ENCODE measurements at regions of chr12 and their contacts with region 1.

Region 1: GRCh38 chr12:19675361-19675760 is 236.1 kb downstream of the AEBP2 start:
- DNase-seq: no peak
- H3K4me3 Mint-ChIP-seq: no peak overlapping the region
- H3K27ac Mint-ChIP-seq: no peak overlapping the region
- H3K4me1 Mint-ChIP-seq: peaks cover 32% of the 10 kb centered on the region
- H3K27me3 Mint-ChIP-seq: no peaks in the 10 kb centered on the region

Region 2: GRCh38 chr12:19547271-19547671 is 128.1 kb before region 1 on chr12:
- CTCF ChIA-PET with region 1: no interaction called
- POLR2A ChIA-PET with region 1: no interaction called
- intact Hi-C with region 1: loop called (anchors 1 kb)
- DNase-seq: no peak
- H3K4me3 Mint-ChIP-seq: no peak overlapping the region
- H3K27ac Mint-ChIP-seq: no peak overlapping the region
- H3K4me1 Mint-ChIP-seq: peaks cover 4% of the 10 kb centered on the region
- H3K27me3 Mint-ChIP-seq: no peaks in the 10 kb centered on the region

Region 3: DNA sequence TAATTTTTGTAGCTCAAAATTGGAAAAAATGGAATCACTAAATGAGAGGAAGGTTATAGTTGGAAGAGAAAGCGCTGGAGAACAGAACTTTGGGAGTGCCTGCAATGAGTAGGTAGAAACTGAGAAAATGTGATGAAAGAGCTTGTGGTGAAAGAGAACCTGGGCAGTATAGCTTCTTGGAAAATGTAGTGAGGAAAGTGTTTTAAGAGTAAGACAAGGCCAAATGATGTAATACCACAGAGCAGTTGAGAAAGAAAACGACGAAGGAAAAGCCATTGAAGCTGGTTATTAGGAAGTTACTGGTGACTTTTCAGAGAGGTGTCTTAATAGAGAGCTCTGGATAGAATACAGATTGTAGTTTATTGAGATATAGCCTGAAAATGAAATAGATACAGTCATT is 19.3 kb after region 1 on chr12:
- CTCF ChIA-PET with region 1: no interaction called
- POLR2A ChIA-PET with region 1: interaction called, 4 read pairs
- intact Hi-C with region 1: loop called (anchors 2 kb)
- DNase-seq: no peak
- H3K4me3 Mint-ChIP-seq: no peak overlapping the region
- H3K27ac Mint-ChIP-seq: no peak overlapping the region
- H3K4me1 Mint-ChIP-seq: peaks cover 16% of the 10 kb centered on the region
- H3K27me3 Mint-ChIP-seq: no peaks in the 10 kb centered on the region

Region 4: DNA sequence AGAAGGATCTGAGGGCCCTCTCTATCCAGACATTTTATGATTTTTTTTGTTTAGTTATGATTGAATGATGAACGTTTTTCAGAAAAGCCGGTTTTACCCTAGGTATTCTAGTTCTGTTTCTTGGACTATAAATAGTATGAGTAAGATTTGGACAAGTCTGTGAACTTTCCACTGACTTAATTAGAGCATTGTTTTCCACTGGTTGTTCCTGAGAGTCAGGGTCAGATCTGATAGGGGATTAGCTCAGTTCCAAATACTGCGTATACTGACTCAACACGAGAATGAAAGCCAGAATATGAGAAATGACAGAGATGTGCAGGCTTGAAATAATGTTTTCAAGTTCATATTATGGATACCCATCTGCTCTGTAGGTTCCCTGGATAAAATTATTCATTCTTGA is 125.5 kb after region 1 on chr12:
- CTCF ChIA-PET with region 1: no interaction called
- POLR2A ChIA-PET with region 1: interaction called, 6 read pairs
- intact Hi-C with region 1: loop called (anchors 1 kb)
- DNase-seq: no peak
- H3K4me3 Mint-ChIP-seq: no peak overlapping the region
- H3K27ac Mint-ChIP-seq: peak overlapping the region; percentile 1
- H3K4me1 Mint-ChIP-seq: peaks cover 26% of the 10 kb centered on the region
- H3K27me3 Mint-ChIP-seq: no peaks in the 10 kb centered on the region